OCI-LY7 (cell line): ENCODE measurements at regions of chrX and their contacts with region 1.

Region 1: GRCh38 chrX:24081661-24082264 is 27.0 kb downstream of the EIF2S3 start:
- DNase-seq: peak; percentile 65
- H3K4me3 ChIP-seq: no peak overlapping the region
- H3K27ac ChIP-seq: no peak overlapping the region
- H3K4me1 ChIP-seq: peaks cover 8% of the 10 kb centered on the region
- CTCF ChIP-seq: peak; percentile 67

Region 2: GRCh38 chrX:24063488-24063887 is 18.3 kb before region 1 on chrX:
- CTCF ChIA-PET with region 1: no interaction called
- POLR2A ChIA-PET with region 1: no interaction called
- intact Hi-C with region 1: loop called (anchors 2 kb)
- DNase-seq: no peak
- H3K4me3 ChIP-seq: no peak overlapping the region
- H3K27ac ChIP-seq: no peak overlapping the region
- H3K4me1 ChIP-seq: no peaks in the 10 kb centered on the region
- CTCF ChIP-seq: no peak

Region 3: DNA sequence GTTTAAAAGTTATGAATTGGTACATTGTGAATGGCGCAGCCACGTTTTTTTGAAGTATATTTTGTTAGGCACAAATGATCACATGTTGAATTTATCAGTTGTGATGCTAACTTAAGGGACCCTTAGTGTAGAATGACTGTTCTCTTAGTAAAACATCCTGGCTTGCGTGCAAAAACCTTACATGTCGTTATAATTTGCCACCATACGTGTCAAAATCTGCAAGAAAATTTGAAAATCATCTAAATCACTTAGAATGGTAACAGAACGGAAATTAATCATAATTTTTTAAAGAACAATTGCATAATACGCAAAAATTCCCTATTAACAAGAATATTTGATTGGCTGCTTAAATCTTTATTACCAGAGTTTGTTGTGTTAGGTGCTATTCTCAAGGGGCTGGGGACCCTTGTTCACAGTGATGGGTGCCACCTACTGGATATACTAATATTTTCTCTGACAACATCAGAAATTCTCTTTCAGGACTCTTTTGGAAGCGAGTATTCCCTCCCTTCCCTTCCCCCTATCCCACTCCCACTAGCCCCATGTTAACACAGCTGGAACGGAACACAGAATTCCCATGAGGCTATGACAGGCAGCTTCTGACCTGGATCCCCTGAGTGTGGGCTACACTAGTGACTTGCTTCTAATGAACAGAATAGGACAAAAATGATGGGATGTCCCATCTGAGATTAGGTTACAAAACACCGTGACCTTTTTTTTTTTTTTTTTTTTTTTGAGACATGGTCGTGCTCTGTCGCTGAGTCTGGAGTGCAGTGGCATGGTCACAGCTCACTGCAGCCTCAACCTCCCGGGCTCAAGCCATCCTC is 160.3 kb after region 1 on chrX:
- CTCF ChIA-PET with region 1: no interaction called
- POLR2A ChIA-PET with region 1: no interaction called
- intact Hi-C with region 1: loop called (anchors 1 kb)
- DNase-seq: peak; percentile 62
- H3K4me3 ChIP-seq: no peak overlapping the region
- H3K27ac ChIP-seq: peak overlapping the region; percentile 73
- H3K4me1 ChIP-seq: peaks cover 26% of the 10 kb centered on the region
- CTCF ChIP-seq: peak; percentile 74